Esophagus muscularis mucosa (tissue), 4 donors: ENCODE measurements at regions of chr4 and their contacts with region 1.

Region 1: GRCh38 chr4:169757575-169758184 is at the start of gene HPF1:
- DNase-seq: peak; percentile 98
- H3K4me3 ChIP-seq: peak within 1 kb of the TSS; percentile 75 to 91 (median 80)
- H3K27ac ChIP-seq: peak within 1 kb of the TSS; percentile 70 to 86 (median 78)
- H3K4me1 ChIP-seq: peaks cover 10 to 25% (median 23%) of the 10 kb centered on the region in 4 donors
- H3K27me3 ChIP-seq: no peaks in the 10 kb centered on the region
- CTCF ChIP-seq: peak in 1 of 3 experiments; percentile 24
- EP300 ChIP-seq: peak; percentile 58
- POLR2A ChIP-seq: no peak
- total RNA-seq, gene HPF1: 15.2 to 33.1 (median 17.7) TPM

Region 2: GRCh38 chr4:169593050-169593560 is 164.6 kb before region 1 on chr4:
- intact Hi-C with region 1: no loop called
- DNase-seq: no peak
- H3K4me3 ChIP-seq: no peak overlapping the region
- H3K27ac ChIP-seq: no peak overlapping the region
- H3K4me1 ChIP-seq: no peaks in the 10 kb centered on the region
- H3K27me3 ChIP-seq: no peaks in the 10 kb centered on the region
- CTCF ChIP-seq: no peak
- EP300 ChIP-seq: no peak
- POLR2A ChIP-seq: no peak

Region 3: DNA sequence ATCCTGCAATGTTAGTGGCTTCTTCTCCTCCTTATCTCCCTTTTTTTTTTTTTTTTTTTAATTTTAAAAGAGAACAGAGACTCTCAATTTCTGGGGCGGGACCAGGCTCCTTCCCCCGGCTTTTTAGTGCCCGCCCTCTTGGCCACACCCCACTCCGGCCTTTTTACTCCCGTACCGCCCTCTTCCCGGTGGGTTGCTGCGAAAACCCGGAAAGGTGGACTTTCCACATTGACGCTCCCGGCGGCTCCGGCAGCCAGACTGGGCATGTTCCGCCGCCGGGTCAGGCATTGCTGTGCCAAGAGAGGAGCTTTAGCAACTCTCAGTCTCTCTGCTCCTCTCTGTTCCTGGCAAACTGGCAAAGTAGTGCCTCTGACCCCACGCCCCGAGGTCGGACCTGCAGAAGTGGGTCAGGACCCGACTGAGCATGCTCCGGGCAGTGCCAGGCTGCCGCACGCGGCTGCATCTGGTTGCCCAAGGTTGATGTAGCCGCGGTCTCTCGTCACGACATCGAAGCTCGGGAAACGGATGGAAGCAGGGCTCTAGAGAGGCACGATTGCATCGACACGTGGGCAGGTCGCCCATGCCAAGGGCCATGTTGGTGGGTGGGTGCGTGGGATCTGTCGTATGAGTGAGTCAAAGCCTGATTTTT is 269.6 kb after region 1 on chr4:
- intact Hi-C with region 1: loop called (anchors 5 kb)
- DNase-seq: peak; percentile 97
- H3K4me3 ChIP-seq: peak overlapping the region; percentile 74 to 97 (median 92)
- H3K27ac ChIP-seq: peak overlapping the region; percentile 92 to 95 (median 93)
- H3K4me1 ChIP-seq: peaks cover 4 to 14% (median 13%) of the 10 kb centered on the region in 4 donors
- H3K27me3 ChIP-seq: peaks cover 0 to 2% (median 0%) of the 10 kb centered on the region in 4 donors
- CTCF ChIP-seq: peak in 1 of 3 experiments; percentile 20
- EP300 ChIP-seq: no peak
- POLR2A ChIP-seq: peak; percentile 47

Region 4: DNA sequence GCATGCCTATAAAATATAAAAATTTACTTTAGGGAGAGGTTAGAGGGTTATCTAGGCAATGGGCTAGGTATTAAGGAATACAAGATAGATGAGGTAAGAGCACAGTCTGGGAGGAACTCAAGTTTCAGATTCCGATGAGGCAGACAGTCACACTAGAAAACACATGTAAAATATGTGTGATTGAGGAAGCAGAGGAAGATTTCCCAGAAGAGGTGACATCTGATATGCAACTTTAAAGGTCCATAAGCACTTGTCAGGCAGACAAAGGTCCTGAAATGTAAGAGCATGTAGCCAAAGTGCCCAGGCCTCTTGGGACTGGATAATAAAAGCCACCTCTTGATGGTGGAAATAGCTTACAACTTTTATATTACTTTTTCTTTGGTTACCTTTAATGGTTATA is 413.2 kb after region 1 on chr4:
- intact Hi-C with region 1: no loop called
- DNase-seq: no peak
- H3K4me3 ChIP-seq: no peak overlapping the region
- H3K27ac ChIP-seq: no peak overlapping the region
- H3K4me1 ChIP-seq: no peaks in the 10 kb centered on the region
- H3K27me3 ChIP-seq: no peaks in the 10 kb centered on the region
- CTCF ChIP-seq: no peak
- EP300 ChIP-seq: no peak
- POLR2A ChIP-seq: no peak